Activated naive CD4-positive, alpha-beta T cell treated with anti-CD3 and anti-CD28 coated beads for 36 hours (primary cell): ENCODE measurements at regions of chr1 and their contacts with region 1.

Region 1: GRCh38 chr1:151968058-151968457 is 25.6 kb downstream of the S100A10 start:
- DNase-seq: peak; percentile 66
- H3K4me3 Mint-ChIP-seq: no peak overlapping the region
- H3K27ac Mint-ChIP-seq: no peak overlapping the region
- H3K4me1 Mint-ChIP-seq: peaks cover 25% of the 10 kb centered on the region
- H3K27me3 Mint-ChIP-seq: peaks cover 2% of the 10 kb centered on the region

Region 2: GRCh38 chr1:151934048-151934493 is 34.0 kb before region 1 on chr1:
- CTCF ChIA-PET with region 1: interaction called, 35 read pairs
- intact Hi-C with region 1: loop called (anchors 1 kb)
- DNase-seq: peak; percentile 64
- H3K4me3 Mint-ChIP-seq: no peak overlapping the region
- H3K27ac Mint-ChIP-seq: no peak overlapping the region
- H3K4me1 Mint-ChIP-seq: no peaks in the 10 kb centered on the region
- H3K27me3 Mint-ChIP-seq: peaks cover 3% of the 10 kb centered on the region

Region 3: DNA sequence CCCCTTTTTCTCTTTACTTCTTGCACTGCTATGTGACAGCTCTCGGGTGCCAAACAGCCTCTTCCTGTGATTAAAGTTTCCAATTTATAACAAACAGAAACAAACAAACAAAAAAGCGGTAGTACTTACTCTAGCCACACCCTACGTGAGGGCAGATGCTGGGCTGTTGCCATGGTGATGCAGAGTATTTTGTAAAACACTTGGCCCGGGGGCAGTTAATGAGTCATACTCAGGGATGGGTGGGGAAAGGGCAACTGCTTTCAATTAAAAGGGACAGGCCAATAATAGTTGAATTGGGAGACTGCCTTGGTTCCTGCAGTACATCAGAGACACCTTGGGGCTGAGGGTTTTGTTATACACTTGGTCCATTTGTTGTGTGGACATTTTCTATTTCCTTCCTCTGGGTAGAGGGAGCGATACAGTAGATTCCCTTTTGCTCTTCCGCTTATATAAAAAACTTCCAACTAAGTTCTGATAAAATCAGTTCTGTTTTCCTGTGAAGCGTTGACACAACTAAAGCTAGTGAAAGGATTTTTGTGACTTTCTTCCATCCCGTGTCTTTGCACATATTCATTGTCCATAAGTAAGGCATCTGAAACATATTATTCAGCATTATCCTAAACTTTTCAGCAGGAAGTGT is 22.2 kb before region 1 on chr1:
- CTCF ChIA-PET with region 1: interaction called, 11 read pairs
- intact Hi-C with region 1: loop called (anchors 1 kb)
- DNase-seq: peak; percentile 75
- H3K4me3 Mint-ChIP-seq: no peak overlapping the region
- H3K27ac Mint-ChIP-seq: peak overlapping the region; percentile 28
- H3K4me1 Mint-ChIP-seq: peaks cover 33% of the 10 kb centered on the region
- H3K27me3 Mint-ChIP-seq: no peaks in the 10 kb centered on the region

Region 4: DNA sequence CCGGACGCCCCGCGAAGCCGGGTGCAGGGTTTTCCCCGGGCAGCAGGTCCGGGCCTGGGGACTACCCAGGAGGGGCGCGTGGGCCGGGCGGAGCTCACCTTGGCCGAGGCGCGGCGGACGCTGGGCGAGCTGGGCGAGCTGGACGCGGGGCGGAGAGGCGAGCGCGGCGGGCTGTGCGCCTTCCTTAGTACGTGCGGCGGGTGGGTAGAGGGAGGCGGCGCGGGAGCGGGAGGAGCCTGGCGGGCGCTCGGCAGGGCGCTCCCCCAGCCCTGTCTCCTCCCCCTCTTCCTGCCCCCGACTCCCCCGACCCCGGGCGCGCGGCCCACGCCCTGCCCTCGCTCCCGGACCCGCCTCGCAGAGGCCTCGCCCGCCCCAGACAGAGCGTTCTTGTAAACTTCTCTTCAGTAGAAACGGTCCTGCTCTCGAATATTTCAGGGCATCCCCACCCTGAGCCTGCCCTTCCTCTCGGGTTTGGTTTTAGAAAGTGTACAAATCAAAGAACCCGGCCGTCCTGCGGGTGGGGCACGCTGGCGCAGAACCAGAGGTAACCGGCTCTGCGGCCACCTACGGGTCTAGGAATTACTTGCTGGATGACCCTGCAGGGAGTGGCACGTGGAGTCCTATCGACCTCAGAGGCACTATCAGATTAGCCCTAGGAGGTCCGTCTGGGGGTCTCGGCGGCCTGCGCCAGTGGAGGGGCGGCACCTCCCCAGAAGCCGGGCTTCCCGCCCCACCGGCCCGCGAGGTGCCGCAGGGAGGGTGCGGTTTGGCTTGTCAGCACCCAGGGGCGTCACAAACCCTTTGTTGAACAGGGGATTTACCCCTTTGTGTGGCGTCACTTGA is 25.8 kb after region 1 on chr1 and contains the start of gene S100A10:
- CTCF ChIA-PET with region 1: interaction called, 206 read pairs
- intact Hi-C with region 1: loop called (anchors 1 kb)
- DNase-seq: peak; percentile 73
- H3K4me3 Mint-ChIP-seq: peak within 1 kb of the TSS; percentile 94
- H3K27ac Mint-ChIP-seq: peak within 1 kb of the TSS; percentile 92
- H3K4me1 Mint-ChIP-seq: peaks cover 44% of the 10 kb centered on the region
- H3K27me3 Mint-ChIP-seq: no peaks in the 10 kb centered on the region
- total RNA-seq, gene S100A10: 159 to 170 TPM

Region 5: GRCh38 chr1:152034646-152035405 is 66.8 kb after region 1 on chr1:
- CTCF ChIA-PET with region 1: interaction called, 7 read pairs
- intact Hi-C with region 1: loop called (anchors 1 kb)
- DNase-seq: peak; percentile 85
- H3K4me3 Mint-ChIP-seq: peak overlapping the region; percentile 96
- H3K27ac Mint-ChIP-seq: peak overlapping the region; percentile 98
- H3K4me1 Mint-ChIP-seq: peaks cover 21% of the 10 kb centered on the region
- H3K27me3 Mint-ChIP-seq: no peaks in the 10 kb centered on the region

Region 6: DNA sequence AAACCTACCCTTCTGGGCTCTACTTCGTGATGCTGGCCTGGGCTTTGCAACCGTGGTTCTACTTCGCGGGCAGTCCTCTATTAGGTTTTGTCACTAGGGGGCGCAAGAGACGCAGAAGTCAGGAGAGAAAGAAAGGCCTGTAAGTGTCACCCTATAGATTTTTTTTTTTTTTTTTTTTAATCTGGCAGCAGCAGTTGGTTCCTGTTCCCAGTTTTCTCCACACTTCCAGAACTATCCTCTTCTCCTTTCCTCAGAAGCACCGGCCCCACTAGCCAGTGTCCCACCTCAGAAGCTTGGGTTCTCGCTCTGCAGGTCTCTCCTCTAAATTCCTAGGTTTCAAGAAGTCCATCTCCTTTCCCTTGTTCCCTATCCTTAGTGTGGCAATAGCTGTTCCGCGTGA is 686.1 kb after region 1 on chr1:
- CTCF ChIA-PET with region 1: no interaction called
- intact Hi-C with region 1: no loop called
- DNase-seq: peak; percentile 78
- H3K4me3 Mint-ChIP-seq: no peak overlapping the region
- H3K27ac Mint-ChIP-seq: no peak overlapping the region
- H3K4me1 Mint-ChIP-seq: peaks cover 3% of the 10 kb centered on the region
- H3K27me3 Mint-ChIP-seq: peaks cover 10% of the 10 kb centered on the region